Ovary (tissue), 10 donors: ENCODE measurements at regions of chr5 and their contacts with region 1.

Region 1: DNA sequence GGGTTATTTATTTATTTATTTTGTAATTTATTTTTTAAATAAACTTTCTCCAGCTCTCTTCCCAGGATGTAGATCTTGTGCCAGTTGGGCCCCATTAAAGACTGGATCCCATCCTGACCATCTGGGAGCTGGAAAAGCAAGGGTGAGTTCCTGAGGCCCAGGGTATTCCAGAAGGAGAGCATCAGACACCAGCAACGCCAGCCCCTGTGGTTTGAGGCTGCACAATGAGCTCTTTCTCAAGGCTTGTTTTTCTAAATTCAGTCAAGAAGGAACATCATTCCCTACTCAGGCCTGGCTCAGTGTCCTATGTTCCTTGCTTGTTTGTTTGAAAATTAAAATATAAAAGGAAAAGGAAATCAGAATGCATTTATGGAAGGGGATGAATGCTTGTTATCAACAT is 313.3 kb downstream of the EBF1 start:
- DNase-seq: no peak
- H3K4me3 ChIP-seq: no peak overlapping the region
- H3K27ac ChIP-seq: no peak overlapping the region
- H3K4me1 ChIP-seq: peaks cover 3% of the 10 kb centered on the region
- H3K27me3 ChIP-seq: no peaks in the 10 kb centered on the region
- CTCF ChIP-seq: no peak
- EP300 ChIP-seq: no peak
- POLR2A ChIP-seq: no peak

Region 2: GRCh38 chr5:158751961-158752655 is 34.3 kb before region 1 on chr5:
- intact Hi-C with region 1: no loop called
- DNase-seq: no peak
- H3K4me3 ChIP-seq: no peak overlapping the region
- H3K27ac ChIP-seq: no peak overlapping the region
- H3K4me1 ChIP-seq: peaks cover 5% of the 10 kb centered on the region
- H3K27me3 ChIP-seq: no peaks in the 10 kb centered on the region
- CTCF ChIP-seq: no peak
- EP300 ChIP-seq: no peak
- POLR2A ChIP-seq: no peak

Region 3: GRCh38 chr5:160064995-160065630 is 1278.7 kb after region 1 on chr5:
- intact Hi-C with region 1: loop called in 1 of 4 experiments (anchors 5 kb)
- DNase-seq: no peak
- H3K4me3 ChIP-seq: no peak overlapping the region
- H3K27ac ChIP-seq: no peak overlapping the region
- H3K4me1 ChIP-seq: peaks cover 1% of the 10 kb centered on the region
- H3K27me3 ChIP-seq: no peaks in the 10 kb centered on the region
- CTCF ChIP-seq: no peak
- EP300 ChIP-seq: no peak
- POLR2A ChIP-seq: no peak